Natural killer cell (primary cell): ENCODE measurements at regions of chr1 and their contacts with region 1.

Region 1: GRCh38 chr1:160539990-160540858 is 17.2 kb upstream of the SLAMF6 start:
- DNase-seq: peak; percentile 46 to 80
- ATAC-seq: peak; percentile 89 to 96 (median 95)
- H3K4me3 ChIP-seq: no peak overlapping the region
- H3K4me3 Mint-ChIP-seq: peak overlapping the region; percentile 78
- H3K27ac ChIP-seq: peak overlapping the region; percentile 70
- H3K27ac Mint-ChIP-seq: peak overlapping the region; percentile 93 to 95
- H3K4me1 ChIP-seq: peaks cover 41% of the 10 kb centered on the region
- H3K4me1 Mint-ChIP-seq: peaks cover 57 to 58% of the 10 kb centered on the region in 2 donors
- H3K27me3 ChIP-seq: no peaks in the 10 kb centered on the region
- H3K27me3 Mint-ChIP-seq: no peaks in the 10 kb centered on the region
- CTCF ChIP-seq: no peak

Region 2: GRCh38 chr1:160504666-160505065 is 35.6 kb before region 1 on chr1:
- intact Hi-C with region 1: no loop called
- DNase-seq: no peak
- ATAC-seq: no peak
- H3K4me3 ChIP-seq: no peak overlapping the region
- H3K4me3 Mint-ChIP-seq: no peak overlapping the region
- H3K27ac ChIP-seq: no peak overlapping the region
- H3K27ac Mint-ChIP-seq: peak overlapping the region; percentile 57 to 93
- H3K4me1 ChIP-seq: peaks cover 16% of the 10 kb centered on the region
- H3K4me1 Mint-ChIP-seq: peaks cover 58 to 82% of the 10 kb centered on the region in 2 donors
- H3K27me3 ChIP-seq: no peaks in the 10 kb centered on the region
- H3K27me3 Mint-ChIP-seq: no peaks in the 10 kb centered on the region
- CTCF ChIP-seq: no peak

Region 3: GRCh38 chr1:160575112-160575664 is 35.0 kb after region 1 on chr1:
- intact Hi-C with region 1: loop called (anchors 5 kb)
- DNase-seq: peak in 1 of 2 donors; percentile 40
- ATAC-seq: peak in 2 of 3 donors; percentile 19 to 54
- H3K4me3 ChIP-seq: no peak overlapping the region
- H3K4me3 Mint-ChIP-seq: no peak overlapping the region
- H3K27ac ChIP-seq: peak overlapping the region; percentile 51
- H3K27ac Mint-ChIP-seq: peak overlapping the region; percentile 12 to 28
- H3K4me1 ChIP-seq: peaks cover 16% of the 10 kb centered on the region
- H3K4me1 Mint-ChIP-seq: peaks cover 43 to 56% of the 10 kb centered on the region in 2 donors
- H3K27me3 ChIP-seq: no peaks in the 10 kb centered on the region
- H3K27me3 Mint-ChIP-seq: no peaks in the 10 kb centered on the region
- CTCF ChIP-seq: no peak